ENCODE measurements at regions of chr2 and their contacts with region 1.

Region 1: DNA sequence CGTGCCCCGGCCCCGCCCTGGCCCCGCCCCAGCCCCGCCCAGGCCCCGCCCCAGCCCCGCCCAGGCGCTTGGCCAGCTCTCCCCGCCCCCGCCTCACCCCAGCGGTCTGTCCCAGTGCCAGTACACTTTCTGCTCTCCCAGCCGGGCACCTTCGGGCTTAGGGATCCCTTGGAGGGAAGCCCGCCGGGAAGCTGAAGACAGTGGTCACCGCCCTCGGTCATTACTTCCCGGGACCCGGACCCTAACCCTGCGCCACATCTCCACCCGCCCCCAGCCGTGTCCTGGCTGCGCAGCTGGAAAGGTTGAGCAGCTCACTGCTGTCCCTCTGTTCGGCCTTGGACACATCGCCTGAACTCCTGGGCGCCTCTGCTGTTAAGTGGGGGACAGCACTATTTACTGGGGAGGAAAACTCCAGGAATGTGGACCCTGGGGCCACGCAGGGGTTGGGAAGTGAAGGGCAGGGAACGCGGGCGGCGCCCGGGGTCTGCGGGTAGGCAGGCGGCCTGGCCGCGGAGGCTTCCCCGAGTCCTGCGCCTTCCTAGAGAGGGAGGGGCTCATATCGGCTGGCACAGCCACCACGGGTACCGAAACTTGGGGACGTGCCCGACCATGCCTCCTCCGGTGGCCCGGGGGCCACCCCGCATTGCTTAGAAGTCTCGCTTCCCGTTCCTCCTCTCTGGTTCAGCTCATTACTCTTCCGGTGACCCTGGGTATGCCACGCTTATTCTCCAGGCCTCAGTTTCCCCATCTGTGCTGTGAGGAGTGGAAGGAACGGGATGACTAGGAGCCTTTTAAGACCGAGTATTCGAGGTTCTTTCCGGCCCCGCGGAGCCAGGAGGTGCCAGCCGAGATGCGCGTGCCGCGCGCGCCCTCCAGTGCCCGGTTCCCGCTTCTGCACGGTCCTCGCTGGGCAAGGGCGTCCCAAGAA is 121.0 kb downstream of the GYPC start:
- DNase-seq: peak; percentile 90
- ATAC-seq: peak; percentile 88
- H3K4me3 ChIP-seq: peak overlapping the region; percentile 63
- H3K27ac ChIP-seq: peak overlapping the region; percentile 73
- H3K4me1 ChIP-seq: peaks cover 5% of the 10 kb centered on the region
- H3K27me3 ChIP-seq: no peaks in the 10 kb centered on the region
- CTCF ChIP-seq: peak; percentile 90

Region 2: GRCh38 chr2:125745514-125745913 is 1031.4 kb before region 1 on chr2:
- intact Hi-C with region 1: loop called (anchors 10 kb)
- DNase-seq: no peak
- ATAC-seq: peak; percentile 67
- H3K4me3 ChIP-seq: no peak overlapping the region
- H3K27ac ChIP-seq: no peak overlapping the region
- H3K4me1 ChIP-seq: no peaks in the 10 kb centered on the region
- H3K27me3 ChIP-seq: no peaks in the 10 kb centered on the region
- CTCF ChIP-seq: peak; percentile 45

Region 3: DNA sequence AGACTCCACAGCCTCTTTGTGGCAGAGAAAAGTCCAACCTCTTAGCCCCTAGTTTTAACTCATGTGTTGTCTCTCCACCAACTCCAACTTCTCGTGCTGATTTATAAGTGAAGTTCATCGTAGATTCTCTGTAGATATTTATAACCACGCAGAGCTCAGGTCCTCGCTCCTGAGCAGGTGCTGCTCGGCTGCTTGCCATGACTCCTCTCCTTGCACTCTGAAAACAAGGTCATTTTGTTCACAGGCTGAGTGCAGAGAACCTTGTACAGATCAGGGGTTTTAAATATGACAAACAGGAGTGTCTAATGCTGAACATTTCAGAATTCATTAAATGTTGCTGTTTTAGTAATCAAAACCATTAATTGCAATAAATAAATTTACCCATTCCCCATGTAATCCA is 451.8 kb before region 1 on chr2:
- intact Hi-C with region 1: no loop called
- DNase-seq: no peak
- ATAC-seq: no peak
- H3K4me3 ChIP-seq: no peak overlapping the region
- H3K27ac ChIP-seq: no peak overlapping the region
- H3K4me1 ChIP-seq: no peaks in the 10 kb centered on the region
- H3K27me3 ChIP-seq: no peaks in the 10 kb centered on the region
- CTCF ChIP-seq: no peak

Measured in upper lobe of right lung (tissue), 1 donor.